ENCODE measurements at regions of chr5 and their contacts with region 1.

Region 1: DNA sequence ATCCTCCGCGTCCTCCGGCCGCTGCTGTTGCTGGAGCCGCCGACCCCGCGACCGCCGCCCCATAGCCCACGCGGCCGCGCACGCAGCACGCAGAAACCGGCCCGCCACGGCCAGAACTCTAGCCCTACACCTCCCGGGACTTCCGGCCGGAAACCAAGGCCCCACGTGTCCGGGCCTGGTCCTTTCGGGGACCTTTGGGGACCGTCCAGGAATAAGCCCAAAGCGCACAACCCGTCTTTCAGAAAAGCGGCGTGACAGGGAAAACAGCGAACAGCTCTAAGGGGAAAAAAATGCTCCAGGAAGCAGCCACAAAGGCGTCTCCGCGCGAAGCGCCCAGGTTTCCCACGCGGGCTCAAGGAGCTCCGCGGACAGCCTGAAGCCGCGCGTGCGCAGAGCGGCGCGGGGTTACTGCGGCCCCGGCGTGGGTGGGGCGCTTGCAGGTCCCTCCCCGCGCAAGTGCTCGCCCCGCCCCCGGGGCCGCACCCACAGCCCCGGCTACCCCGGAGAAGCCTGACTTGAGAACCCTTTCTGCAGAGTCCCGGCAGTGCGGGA is at the starts of genes NSUN2 and SRD5A1:
- DNase-seq: peak; percentile 90 to 92
- ATAC-seq: peak; percentile 97 to 99 (median 98)
- H3K4me3 ChIP-seq: peak within 1 kb of the TSS; percentile 50 to 100 (median 96)
- H3K27ac ChIP-seq: peak within 1 kb of the TSS; percentile 96 to 99 (median 97)
- H3K4me1 ChIP-seq: peaks cover 6 to 45% (median 30%) of the 10 kb centered on the region in 9 donors
- H3K27me3 ChIP-seq: no peaks in the 10 kb centered on the region
- CTCF ChIP-seq: no peak
- total RNA-seq, gene NSUN2: 30.0 to 42.6 (median 36.1) TPM
- total RNA-seq, gene SRD5A1: 2.1 to 5.5 (median 3.2) TPM

Region 2: GRCh38 chr5:6704361-6704851 is 71.4 kb after region 1 on chr5:
- intact Hi-C with region 1: loop called in 2 of 10 experiments (anchors 5 kb)
- DNase-seq: peak; percentile 70 to 83
- ATAC-seq: peak; percentile 91 to 98 (median 95)
- H3K4me3 ChIP-seq: peak overlapping the region in 2 of 10 donors; percentile 8 to 11
- H3K27ac ChIP-seq: peak overlapping the region; percentile 55 to 91 (median 88)
- H3K4me1 ChIP-seq: peaks cover 12 to 32% (median 22%) of the 10 kb centered on the region in 9 donors
- H3K27me3 ChIP-seq: no peaks in the 10 kb centered on the region
- CTCF ChIP-seq: no peak

Region 3: DNA sequence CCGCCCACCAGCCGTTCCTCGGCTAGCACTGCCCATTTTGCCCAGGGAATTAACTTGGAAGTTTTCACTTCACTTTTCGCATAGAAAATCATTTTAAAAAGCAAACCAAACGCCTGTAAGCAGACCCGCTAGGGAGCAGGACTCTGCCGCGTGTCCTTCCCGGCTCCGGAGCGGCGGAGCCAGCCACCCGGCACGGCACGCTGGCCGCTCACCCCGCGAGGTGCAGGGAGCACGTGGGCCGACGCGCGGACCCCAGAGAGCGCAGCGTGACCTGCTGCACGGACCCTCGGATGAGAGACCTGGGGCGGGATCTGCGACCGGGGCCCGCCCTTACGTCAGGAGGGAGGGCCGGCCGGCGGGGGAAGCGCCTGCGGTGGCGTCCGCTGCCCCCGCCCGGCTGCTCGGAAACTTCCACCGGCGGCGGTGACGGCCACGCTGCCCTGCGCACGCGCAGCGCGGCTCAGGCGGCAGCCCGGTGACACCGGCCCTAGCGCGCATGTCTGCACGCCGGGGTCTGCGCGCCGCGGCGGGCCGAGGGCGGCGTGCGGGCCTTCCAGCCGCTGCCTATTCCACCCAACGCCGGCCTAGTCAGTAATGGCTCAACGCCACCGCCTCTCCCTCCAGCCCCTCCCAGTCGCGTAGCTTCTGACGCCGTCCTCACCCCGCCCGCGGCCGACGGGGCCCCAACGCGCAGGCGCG is 79.7 kb after region 1 on chr5:
- intact Hi-C with region 1: loop called in 7 of 10 experiments (anchors 1 to 10 kb)
- DNase-seq: peak; percentile 96 to 98
- ATAC-seq: peak; percentile 88 to 97 (median 92)
- H3K4me3 ChIP-seq: peak overlapping the region; percentile 51 to 97 (median 72)
- H3K27ac ChIP-seq: peak overlapping the region; percentile 93 to 98 (median 97)
- H3K4me1 ChIP-seq: peaks cover 5 to 47% (median 38%) of the 10 kb centered on the region in 9 donors
- H3K27me3 ChIP-seq: no peaks in the 10 kb centered on the region
- CTCF ChIP-seq: peak in 2 of 9 donors; percentile 1 to 23

Region 4: DNA sequence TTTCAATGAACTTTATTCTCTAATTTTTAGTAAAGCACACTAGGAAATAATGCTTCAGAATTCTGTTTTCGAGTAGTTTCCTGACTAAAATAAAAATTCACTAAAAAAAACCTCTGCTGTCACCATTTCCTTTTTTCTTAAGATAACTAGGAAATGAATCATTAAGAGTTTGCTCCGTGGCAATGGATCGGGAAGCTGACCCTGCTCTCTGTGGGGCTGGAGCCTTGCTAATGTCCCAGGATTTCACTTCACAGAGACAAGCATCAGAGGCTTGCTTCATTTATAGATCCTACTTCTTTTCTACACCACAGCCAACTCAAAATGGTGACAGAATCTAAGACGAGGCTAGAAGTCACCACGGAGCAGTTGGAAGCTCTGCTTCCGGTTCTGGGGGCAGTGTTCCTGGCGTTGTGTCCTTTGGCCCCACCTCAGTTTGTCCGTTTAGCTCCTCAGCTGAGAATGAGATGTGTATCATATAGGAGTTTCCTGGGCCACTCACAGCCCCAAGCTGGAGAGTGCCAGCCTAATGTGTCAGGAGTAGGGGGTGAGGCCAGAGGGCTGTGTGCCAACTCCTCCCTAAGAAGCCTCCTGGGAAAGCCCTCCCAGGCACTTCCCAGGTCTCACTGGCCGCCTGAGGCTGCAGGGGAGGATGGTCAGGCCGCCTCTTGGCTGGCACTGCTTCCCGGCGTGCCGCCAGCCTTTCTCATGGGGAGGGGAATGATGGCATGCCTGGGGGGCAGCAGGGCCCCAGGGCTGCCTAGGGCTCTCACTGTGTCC is 99.8 kb after region 1 on chr5:
- intact Hi-C with region 1: loop called in 1 of 10 experiments (anchors 10 kb)
- DNase-seq: peak; percentile 37 to 53
- ATAC-seq: peak; percentile 39 to 84 (median 65)
- H3K4me3 ChIP-seq: peak overlapping the region in 6 of 10 donors; percentile 12 to 30 (median 16)
- H3K27ac ChIP-seq: peak overlapping the region in 9 of 10 donors; percentile 55 to 86 (median 72)
- H3K4me1 ChIP-seq: peaks cover 12 to 93% (median 70%) of the 10 kb centered on the region in 9 donors
- H3K27me3 ChIP-seq: no peaks in the 10 kb centered on the region
- CTCF ChIP-seq: no peak

Region 5: DNA sequence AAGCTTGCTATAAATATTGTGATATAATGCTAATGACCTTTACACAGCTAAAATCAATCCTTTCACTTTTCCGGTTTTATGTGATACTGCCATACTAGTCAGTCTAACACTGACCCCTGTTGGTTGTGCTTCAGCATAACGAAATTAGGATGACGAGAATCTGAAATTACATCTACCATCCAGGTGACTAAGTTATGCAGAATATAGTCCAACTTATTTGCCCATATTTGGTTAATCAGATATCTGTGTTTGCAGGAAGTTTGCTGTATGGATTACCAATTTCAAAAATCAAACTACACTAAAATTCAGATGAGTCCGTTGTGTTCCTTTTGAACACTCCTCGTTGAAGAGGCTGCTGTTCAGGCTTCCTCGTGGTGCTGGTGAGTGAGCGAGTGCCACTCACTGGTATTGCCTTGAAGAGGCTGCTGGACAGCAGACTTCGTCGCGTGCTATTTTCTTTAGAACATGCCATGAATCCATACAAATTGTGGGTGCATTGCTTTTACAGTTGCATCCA is 112.8 kb after region 1 on chr5:
- intact Hi-C with region 1: loop called in 8 of 10 experiments (anchors 1 to 10 kb)
- DNase-seq: no peak
- ATAC-seq: peak; percentile 41 to 82 (median 64)
- H3K4me3 ChIP-seq: no peak overlapping the region
- H3K27ac ChIP-seq: peak overlapping the region in 3 of 10 donors; percentile 45 to 58 (median 49)
- H3K4me1 ChIP-seq: peaks cover 0 to 14% (median 8%) of the 10 kb centered on the region in 9 donors
- H3K27me3 ChIP-seq: no peaks in the 10 kb centered on the region
- CTCF ChIP-seq: peak; percentile 69 to 85 (median 81)